ENCODE measurements at regions of chr5 and their contacts with region 1.

Region 1: GRCh38 chr5:54517174-54518092 is at the start of gene SNX18:
- DNase-seq: peak; percentile 93
- ATAC-seq: peak; percentile 81
- H3K4me3 ChIP-seq: peak within 1 kb of the TSS; percentile 92
- H3K27ac ChIP-seq: peak within 1 kb of the TSS; percentile 88
- H3K4me1 ChIP-seq: peaks cover 11% of the 10 kb centered on the region
- H3K27me3 ChIP-seq: no peaks in the 10 kb centered on the region
- CTCF ChIP-seq: peak; percentile 99
- POLR2A ChIP-seq: peak; percentile 74; the same call in 1 of the 2 replicates
- RAD21 ChIP-seq: peak; percentile 100
- total RNA-seq, gene SNX18: 50.0 and 67.8 TPM in 2 replicates

Region 2: DNA sequence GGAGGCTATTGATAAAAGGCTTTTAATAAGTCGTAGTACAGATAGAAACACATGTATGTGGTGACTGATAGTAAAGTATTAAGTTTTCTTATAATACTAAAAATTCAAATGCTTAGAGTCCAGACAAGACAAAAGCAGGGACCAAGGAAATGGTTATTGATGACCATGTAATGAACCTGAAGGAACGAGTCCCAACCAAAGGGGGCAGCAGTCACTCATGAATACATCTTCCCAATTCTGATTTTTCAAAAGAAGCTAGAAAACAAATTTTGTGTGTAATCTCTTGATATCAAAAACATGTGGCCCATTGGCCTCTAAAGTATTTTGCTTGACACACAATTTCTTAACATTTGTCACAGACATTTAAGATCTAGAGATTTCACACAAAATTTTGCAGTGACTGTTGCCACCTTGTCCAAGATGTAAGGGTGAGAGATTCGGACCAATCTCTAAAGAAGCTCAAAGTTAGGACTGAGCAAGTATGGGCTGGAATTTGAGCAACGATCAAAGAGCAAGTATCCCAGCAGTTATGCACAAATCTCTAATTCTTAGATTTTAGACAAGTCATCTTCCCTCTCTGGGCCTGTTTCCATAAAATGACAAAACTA is 273.9 kb before region 1 on chr5:
- CTCF ChIA-PET with region 1: no interaction called
- POLR2A ChIA-PET with region 1: no interaction called
- dilution Hi-C with region 1: no loop called
- in situ Hi-C with region 1: no loop called
- intact Hi-C with region 1: loop called (anchors 10 kb)
- DNase-seq: peak; percentile 47
- ATAC-seq: peak; percentile 76
- H3K4me3 ChIP-seq: no peak overlapping the region
- H3K27ac ChIP-seq: no peak overlapping the region
- H3K4me1 ChIP-seq: no peaks in the 10 kb centered on the region
- H3K27me3 ChIP-seq: no peaks in the 10 kb centered on the region
- CTCF ChIP-seq: peak; percentile 83
- POLR2A ChIP-seq: no peak
- RAD21 ChIP-seq: peak; percentile 86

Region 3: GRCh38 chr5:54669845-54670244 is 152.4 kb after region 1 on chr5:
- CTCF ChIA-PET with region 1: no interaction called
- POLR2A ChIA-PET with region 1: interaction called, 3 read pairs
- dilution Hi-C with region 1: no loop called
- in situ Hi-C with region 1: no loop called
- intact Hi-C with region 1: loop called (anchors 1 kb)
- DNase-seq: peak; percentile 48
- ATAC-seq: peak; percentile 32
- H3K4me3 ChIP-seq: no peak overlapping the region
- H3K27ac ChIP-seq: peak overlapping the region; percentile 98; the same call in 1 of the 2 replicates
- H3K4me1 ChIP-seq: peaks cover 25% of the 10 kb centered on the region
- H3K27me3 ChIP-seq: no peaks in the 10 kb centered on the region
- CTCF ChIP-seq: no peak
- POLR2A ChIP-seq: no peak
- RAD21 ChIP-seq: no peak

Region 4: GRCh38 chr5:54743997-54744788 is 226.8 kb after region 1 on chr5:
- CTCF ChIA-PET with region 1: interaction called, 4 read pairs
- POLR2A ChIA-PET with region 1: interaction called, 5 read pairs
- dilution Hi-C with region 1: no loop called
- in situ Hi-C with region 1: no loop called
- intact Hi-C with region 1: loop called (anchors 1 kb)
- DNase-seq: peak; percentile 99
- ATAC-seq: peak; percentile 82
- H3K4me3 ChIP-seq: no peak overlapping the region
- H3K27ac ChIP-seq: peak overlapping the region; percentile 100
- H3K4me1 ChIP-seq: peaks cover 29% of the 10 kb centered on the region
- H3K27me3 ChIP-seq: no peaks in the 10 kb centered on the region
- CTCF ChIP-seq: no peak
- POLR2A ChIP-seq: no peak
- RAD21 ChIP-seq: no peak

Region 5: DNA sequence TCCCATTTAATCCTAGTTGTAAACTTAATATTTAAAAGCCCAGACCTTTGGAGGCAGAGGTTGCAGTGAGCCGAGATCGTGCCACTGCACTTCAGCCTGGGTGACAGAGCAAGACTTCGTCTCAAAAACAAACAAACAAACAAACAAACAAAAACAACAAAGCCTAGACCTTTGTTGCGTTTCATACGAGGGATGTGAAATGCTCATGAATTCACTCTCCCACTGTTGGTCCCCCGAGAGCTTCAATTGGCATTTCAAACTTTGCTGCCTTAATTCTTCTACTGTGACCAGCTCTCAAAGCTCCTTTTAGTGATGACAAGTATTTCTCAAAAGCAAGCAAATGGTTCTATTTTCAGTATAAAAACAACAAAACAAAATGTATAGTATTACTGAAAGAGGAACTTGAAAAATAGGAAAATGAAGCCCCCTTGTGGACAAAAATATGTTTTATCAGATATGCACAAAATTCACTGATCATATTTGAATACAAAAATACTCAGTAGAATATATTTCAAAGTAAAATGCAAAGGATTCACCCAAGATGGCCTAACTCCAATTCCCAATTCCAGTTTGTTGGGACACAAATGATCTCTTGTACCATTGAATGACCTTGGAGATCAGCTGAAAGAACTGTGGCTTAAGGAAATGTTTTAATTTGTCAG is 327.6 kb after region 1 on chr5:
- CTCF ChIA-PET with region 1: interaction called, 14 read pairs
- POLR2A ChIA-PET with region 1: interaction called, 4 read pairs
- dilution Hi-C with region 1: no loop called
- in situ Hi-C with region 1: no loop called
- intact Hi-C with region 1: loop called (anchors 1 kb)
- DNase-seq: peak; percentile 79
- ATAC-seq: peak; percentile 71
- H3K4me3 ChIP-seq: no peak overlapping the region
- H3K27ac ChIP-seq: peak overlapping the region; percentile 89
- H3K4me1 ChIP-seq: peaks cover 21% of the 10 kb centered on the region
- H3K27me3 ChIP-seq: no peaks in the 10 kb centered on the region
- CTCF ChIP-seq: peak; percentile 68
- POLR2A ChIP-seq: peak; percentile 25; the same call in 1 of the 2 replicates
- RAD21 ChIP-seq: peak; percentile 73

Region 6: DNA sequence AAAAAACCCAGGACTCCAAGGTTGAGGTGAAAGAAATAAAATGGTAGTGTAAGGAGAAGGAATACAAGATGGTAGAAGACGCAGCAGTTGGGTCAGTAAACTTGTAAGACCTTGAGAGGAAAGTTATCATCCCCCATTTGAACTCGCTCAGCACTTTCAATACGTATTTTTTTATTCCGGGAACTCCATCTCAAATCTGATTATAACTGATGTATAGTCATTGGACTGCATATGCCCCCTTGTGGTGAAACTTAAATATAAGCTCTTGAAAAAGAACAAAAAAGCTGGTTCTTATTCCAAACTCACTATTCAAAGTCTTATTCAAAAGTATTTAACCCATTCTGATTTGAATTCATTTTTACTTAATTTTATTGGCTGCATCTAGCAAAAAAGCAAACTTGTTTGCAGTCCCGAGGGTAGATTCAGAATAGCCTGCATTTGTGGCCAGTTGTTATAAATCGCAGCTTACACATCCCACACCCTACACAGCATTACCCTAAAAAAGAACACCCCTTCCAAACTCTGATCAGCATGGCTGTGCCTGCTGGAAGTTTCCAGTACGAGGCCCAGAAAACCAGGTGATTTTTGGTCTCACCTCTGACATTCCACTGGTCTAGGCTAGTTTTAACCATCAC is 350.0 kb after region 1 on chr5:
- CTCF ChIA-PET with region 1: interaction called, 14 read pairs
- POLR2A ChIA-PET with region 1: interaction called, 3 read pairs
- dilution Hi-C with region 1: no loop called
- in situ Hi-C with region 1: loop called (anchors 5 kb)
- intact Hi-C with region 1: loop called (anchors 1 kb)
- DNase-seq: peak; percentile 75
- ATAC-seq: peak; percentile 79
- H3K4me3 ChIP-seq: peak overlapping the region; percentile 24; the same call in 1 of the 2 replicates
- H3K27ac ChIP-seq: no peak overlapping the region
- H3K4me1 ChIP-seq: peaks cover 5% of the 10 kb centered on the region; the same call in 1 of the 2 replicates
- H3K27me3 ChIP-seq: peaks cover 5% of the 10 kb centered on the region; the same call in 1 of the 2 replicates
- CTCF ChIP-seq: peak; percentile 70
- POLR2A ChIP-seq: no peak
- RAD21 ChIP-seq: peak; percentile 76

Region 7: DNA sequence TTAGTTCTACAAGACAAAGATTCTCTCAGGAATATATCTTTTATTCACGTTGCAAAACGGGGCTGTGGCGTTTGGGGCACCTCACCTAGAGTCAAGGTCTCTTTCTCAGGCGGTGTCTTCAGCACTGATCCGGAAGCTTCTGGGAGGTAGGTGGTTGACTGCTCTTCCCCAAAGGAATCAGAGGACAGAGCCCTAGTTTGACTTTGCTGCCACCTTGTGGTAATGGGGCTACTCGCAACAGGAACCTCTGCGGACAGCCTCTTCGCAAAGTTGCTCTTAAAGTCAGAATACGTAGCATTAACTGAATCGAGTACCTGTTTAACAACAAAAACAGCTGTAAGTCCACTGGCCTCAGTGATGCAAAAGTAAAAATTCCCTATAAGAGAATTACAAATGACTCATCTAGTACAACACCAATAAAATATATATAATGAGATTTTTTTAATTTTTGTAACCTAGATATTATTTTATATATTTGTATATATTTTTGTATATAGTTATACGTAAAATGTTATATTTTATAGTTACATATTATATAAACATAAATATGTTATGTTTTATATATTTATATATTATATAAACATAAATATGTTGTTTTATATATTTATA is 629.2 kb after region 1 on chr5:
- CTCF ChIA-PET with region 1: no interaction called
- POLR2A ChIA-PET with region 1: no interaction called
- dilution Hi-C with region 1: no loop called
- in situ Hi-C with region 1: loop called (anchors 10 kb)
- intact Hi-C with region 1: loop called (anchors 1 kb)
- DNase-seq: peak; percentile 82
- ATAC-seq: peak; percentile 97
- H3K4me3 ChIP-seq: no peak overlapping the region
- H3K27ac ChIP-seq: no peak overlapping the region
- H3K4me1 ChIP-seq: no peaks in the 10 kb centered on the region
- H3K27me3 ChIP-seq: peaks cover 11% of the 10 kb centered on the region
- CTCF ChIP-seq: peak; percentile 98
- POLR2A ChIP-seq: peak; percentile 56; the same call in 1 of the 2 replicates
- RAD21 ChIP-seq: peak; percentile 99

Measured in IMR-90 (cell line).